A549 (cell line): ENCODE measurements at regions of chr7 and their contacts with region 1.

Region 1: GRCh38 chr7:5363729-5364128 is 59.9 kb downstream of the TNRC18 start:
- DNase-seq: no peak
- ATAC-seq: no peak
- H3K4me3 ChIP-seq: no peak overlapping the region
- H3K27ac ChIP-seq: no peak overlapping the region
- H3K4me1 ChIP-seq: no peaks in the 10 kb centered on the region
- CTCF ChIP-seq: no peak
- EP300 ChIP-seq: no peak
- POLR2A ChIP-seq: no peak
- RAD21 ChIP-seq: no peak

Region 2: GRCh38 chr7:5045558-5046396 is 318.0 kb before region 1 on chr7 and contains the start of gene RBAK:
- CTCF ChIA-PET with region 1: no interaction called
- POLR2A ChIA-PET with region 1: no interaction called
- DNase-seq: peak; percentile 83 to 97
- ATAC-seq: peak; percentile 100
- H3K4me3 ChIP-seq: peak within 1 kb of the TSS; percentile 85
- H3K27ac ChIP-seq: peak within 1 kb of the TSS; percentile 89 to 98
- H3K4me1 ChIP-seq: no peaks in the 10 kb centered on the region
- CTCF ChIP-seq: no peak
- EP300 ChIP-seq: no peak
- POLR2A ChIP-seq: peak; percentile 74
- RAD21 ChIP-seq: no peak
- polyA plus RNA-seq, gene RBAK: 9.5 and 11.2 TPM in 2 replicates

Region 3: GRCh38 chr7:5266191-5267028 is 97.3 kb before region 1 on chr7:
- CTCF ChIA-PET with region 1: no interaction called
- POLR2A ChIA-PET with region 1: no interaction called
- DNase-seq: peak in 1 of 2 experiments; percentile 37
- ATAC-seq: peak in 1 of 2 experiments; percentile 13; a peak in 3 of 6 replicates
- H3K4me3 ChIP-seq: no peak overlapping the region
- H3K27ac ChIP-seq: no peak overlapping the region
- H3K4me1 ChIP-seq: no peaks in the 10 kb centered on the region
- CTCF ChIP-seq: no peak
- EP300 ChIP-seq: no peak
- POLR2A ChIP-seq: no peak
- RAD21 ChIP-seq: no peak

Region 4: GRCh38 chr7:5345671-5346070 is 18.1 kb before region 1 on chr7:
- CTCF ChIA-PET with region 1: interaction called, 67 read pairs
- POLR2A ChIA-PET with region 1: no interaction called
- DNase-seq: no peak
- ATAC-seq: no peak; a peak in 1 of 6 replicates
- H3K4me3 ChIP-seq: no peak overlapping the region
- H3K27ac ChIP-seq: no peak overlapping the region
- H3K4me1 ChIP-seq: no peaks in the 10 kb centered on the region
- CTCF ChIP-seq: no peak
- EP300 ChIP-seq: no peak
- POLR2A ChIP-seq: no peak
- RAD21 ChIP-seq: no peak

Region 5: GRCh38 chr7:5396999-5397663 is 33.4 kb after region 1 on chr7:
- CTCF ChIA-PET with region 1: interaction called, 28 read pairs
- POLR2A ChIA-PET with region 1: interaction called, 8 read pairs
- DNase-seq: peak; percentile 96 to 99
- ATAC-seq: peak; percentile 94 to 97
- H3K4me3 ChIP-seq: peak overlapping the region; percentile 74
- H3K27ac ChIP-seq: peak overlapping the region; percentile 96 to 98
- H3K4me1 ChIP-seq: peaks cover 21% of the 10 kb centered on the region
- CTCF ChIP-seq: no peak
- EP300 ChIP-seq: peak in 1 of 2 experiments; percentile 42; a peak in 2 of 5 replicates
- POLR2A ChIP-seq: peak; percentile 62
- RAD21 ChIP-seq: no peak; a peak in 1 of 5 replicates

Region 6: GRCh38 chr7:5450549-5451372 is 87.0 kb after region 1 on chr7:
- CTCF ChIA-PET with region 1: interaction called, 40 read pairs
- POLR2A ChIA-PET with region 1: no interaction called
- DNase-seq: peak; percentile 41 to 58
- ATAC-seq: peak; percentile 73 to 85
- H3K4me3 ChIP-seq: no peak overlapping the region
- H3K27ac ChIP-seq: no peak overlapping the region
- H3K4me1 ChIP-seq: peaks cover 18% of the 10 kb centered on the region; the same call in 2 of the 3 replicates
- CTCF ChIP-seq: peak; percentile 81
- EP300 ChIP-seq: no peak
- POLR2A ChIP-seq: no peak
- RAD21 ChIP-seq: peak; percentile 91 to 93

Region 7: DNA sequence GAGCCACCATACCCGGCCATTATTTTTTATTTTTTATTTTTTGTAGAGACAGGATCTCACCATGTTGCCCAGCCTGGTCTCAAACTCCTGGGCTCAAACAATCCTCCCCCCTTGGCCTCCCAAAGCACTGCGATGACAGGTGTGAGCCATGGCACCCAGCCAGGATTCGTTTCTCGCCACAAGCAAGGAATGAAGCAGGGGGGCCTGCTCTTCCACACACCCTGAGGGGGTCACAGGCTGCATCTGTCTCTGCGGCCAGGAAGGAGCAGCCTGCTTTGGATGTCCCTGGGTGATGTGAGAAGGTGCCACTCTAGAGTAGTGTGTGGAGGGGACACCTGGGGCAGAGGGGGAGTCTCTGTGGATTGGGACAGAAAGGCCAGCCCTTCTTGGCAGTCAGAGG is 121.2 kb after region 1 on chr7:
- CTCF ChIA-PET with region 1: interaction called, 15 read pairs
- POLR2A ChIA-PET with region 1: no interaction called
- DNase-seq: no peak
- ATAC-seq: no peak
- H3K4me3 ChIP-seq: no peak overlapping the region
- H3K27ac ChIP-seq: no peak overlapping the region
- H3K4me1 ChIP-seq: peaks cover 4% of the 10 kb centered on the region; the same call in 2 of the 3 replicates
- CTCF ChIP-seq: no peak
- EP300 ChIP-seq: no peak
- POLR2A ChIP-seq: no peak
- RAD21 ChIP-seq: no peak

Region 8: DNA sequence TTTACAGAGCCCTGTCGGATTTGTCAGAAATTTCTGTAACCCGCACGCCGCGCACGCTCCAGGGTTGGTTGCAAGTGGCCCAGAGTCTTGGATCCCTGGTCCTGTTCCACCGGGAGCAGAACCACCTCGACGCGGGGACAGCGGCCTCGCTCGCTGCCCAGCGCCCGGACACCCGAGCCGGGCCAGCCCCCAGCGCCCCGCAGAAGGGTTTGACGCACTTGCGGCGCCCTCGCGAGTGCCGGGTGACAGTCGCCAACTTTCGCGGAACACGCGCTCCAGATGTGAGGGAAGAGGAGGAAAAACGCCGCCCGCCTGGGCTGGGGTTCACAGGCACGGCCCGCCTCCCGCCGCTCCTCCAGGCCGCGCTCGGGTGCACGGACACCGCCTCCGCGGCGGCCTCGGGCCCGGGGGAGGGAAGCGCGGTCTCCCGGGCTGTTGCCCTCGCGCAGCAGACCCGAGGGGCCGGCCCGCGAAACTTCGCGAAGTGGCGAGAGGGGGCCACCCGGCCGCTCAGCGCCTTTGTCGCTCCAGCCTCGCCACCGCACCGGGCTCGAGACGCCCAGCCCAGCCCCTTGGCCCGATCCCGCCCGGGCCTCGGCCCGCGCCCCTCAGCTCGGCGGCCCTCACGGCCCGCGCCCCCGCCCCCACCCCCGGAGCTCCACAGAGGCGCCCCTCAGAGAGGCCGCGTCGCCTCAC is 417.2 kb after region 1 on chr7:
- CTCF ChIA-PET with region 1: no interaction called
- POLR2A ChIA-PET with region 1: no interaction called
- DNase-seq: peak in 1 of 2 experiments; percentile 25
- ATAC-seq: peak; percentile 77 to 78
- H3K4me3 ChIP-seq: peak overlapping the region; percentile 67
- H3K27ac ChIP-seq: peak overlapping the region; percentile 81 to 96
- H3K4me1 ChIP-seq: peaks cover 3% of the 10 kb centered on the region; the same call in 1 of the 3 replicates
- CTCF ChIP-seq: no peak
- EP300 ChIP-seq: no peak
- POLR2A ChIP-seq: no peak
- RAD21 ChIP-seq: no peak